Posterior vena cava (tissue), 2 donors: ENCODE measurements at regions of chr20 and their contacts with region 1.

Region 1: DNA sequence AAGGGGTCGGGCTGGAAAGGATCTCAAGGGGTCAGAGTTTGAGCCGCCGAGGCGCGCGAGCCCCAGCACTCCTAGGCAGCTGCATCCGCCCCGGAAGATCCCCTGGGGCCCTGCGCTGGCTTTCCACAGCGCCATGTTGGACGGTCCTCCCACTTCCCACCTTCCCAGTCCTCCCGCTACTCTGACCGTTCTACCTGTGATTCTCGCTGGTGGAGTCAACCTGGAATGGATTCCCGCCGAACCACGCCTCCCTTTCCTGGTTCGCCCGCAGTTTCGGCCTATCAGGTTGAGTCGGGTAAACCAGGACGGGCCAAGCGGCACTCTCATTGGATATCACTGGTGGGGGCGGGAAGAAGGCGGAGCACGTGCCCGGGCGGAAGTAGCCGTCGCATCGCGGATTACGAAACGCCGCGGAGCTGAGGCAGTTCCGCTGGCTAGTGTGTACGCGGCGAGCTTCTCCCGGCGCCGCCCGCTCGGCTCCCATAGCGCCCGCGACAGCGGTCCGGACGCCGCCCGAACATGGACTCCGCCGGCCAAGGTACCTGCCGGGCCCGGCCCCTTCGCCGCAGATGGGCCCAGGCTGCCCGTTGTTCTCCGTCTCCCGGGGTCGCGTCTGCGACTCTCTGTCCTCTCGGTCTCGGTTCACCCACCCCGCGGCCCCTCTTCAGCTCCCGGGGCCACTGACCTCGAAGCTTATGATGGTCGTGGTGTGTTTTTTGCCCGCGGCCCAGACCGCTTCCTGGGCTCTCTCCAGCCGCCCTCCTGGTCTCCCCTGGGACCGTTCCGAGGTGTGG is at the start of gene TPD52L2:
- DNase-seq: peak; percentile 100
- total RNA-seq, gene TPD52L2: 113 to 132 TPM

Region 2: DNA sequence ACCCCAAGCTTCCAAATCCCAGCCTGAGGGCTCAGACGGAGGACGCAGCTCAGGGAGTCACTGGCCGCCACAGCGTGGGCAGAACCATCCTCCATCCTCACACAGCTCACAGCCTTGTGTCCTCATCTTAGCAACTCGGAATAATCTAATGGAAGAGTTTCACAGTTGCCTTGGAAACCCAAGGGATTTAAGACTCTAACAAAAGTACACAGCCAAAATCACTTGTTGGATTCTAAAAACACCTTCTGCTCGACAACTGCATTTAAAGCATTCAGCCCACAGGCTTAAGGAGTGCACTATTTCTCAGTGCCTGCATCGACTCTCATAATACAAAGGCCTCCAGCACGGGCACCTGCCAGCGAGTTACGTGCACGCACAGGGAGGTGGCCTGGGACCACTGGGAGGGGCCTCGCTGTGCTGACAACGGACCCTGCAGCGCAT is 79.3 kb before region 1 on chr20:
- intact Hi-C with region 1: loop called in 1 of 2 experiments (anchors 5 kb)
- DNase-seq: no peak

Region 3: DNA sequence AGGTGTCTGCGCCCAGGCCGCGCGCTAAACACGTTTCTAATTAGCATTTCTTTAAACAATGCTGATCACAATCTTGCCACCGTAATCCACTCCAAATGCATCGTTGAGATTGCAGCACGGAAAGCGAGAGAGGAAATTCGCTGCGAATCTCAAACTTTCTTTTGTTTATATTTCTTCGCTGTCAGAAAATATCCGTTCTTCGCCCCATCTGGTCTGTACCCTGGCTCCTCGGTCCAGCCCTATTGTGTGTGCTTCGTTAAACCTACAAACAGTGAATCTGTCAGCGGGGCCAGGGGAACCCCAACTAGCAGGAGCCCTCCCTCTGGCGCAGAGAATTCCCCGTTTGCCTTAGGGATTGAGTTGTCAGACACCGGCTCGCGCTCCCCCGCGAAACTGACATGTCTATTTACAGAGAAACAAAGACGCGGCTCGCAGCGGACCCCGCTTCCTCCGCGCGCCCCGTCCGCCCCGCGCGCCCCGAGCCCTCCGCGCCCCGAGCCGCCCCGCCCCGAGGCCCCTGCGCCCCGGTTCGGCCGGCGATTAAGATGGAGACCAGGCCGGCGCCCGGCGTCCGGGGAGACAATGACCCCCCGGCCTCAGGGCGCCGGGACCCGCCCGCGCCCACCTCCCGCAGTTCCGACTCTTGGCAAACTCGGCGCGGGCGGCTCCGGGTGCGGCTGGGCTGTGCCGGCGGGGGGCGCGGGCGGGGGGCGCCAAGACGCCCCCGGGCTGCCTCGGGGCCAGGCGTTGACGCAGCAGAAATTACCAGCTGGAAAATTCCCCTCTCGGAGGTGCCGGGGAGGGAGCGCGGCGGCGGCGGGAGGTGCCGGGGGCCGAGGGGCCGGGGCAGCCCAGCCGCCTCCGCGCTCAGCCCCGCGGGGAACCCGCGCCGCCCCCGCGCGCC is 34.9 kb before region 1 on chr20:
- intact Hi-C with region 1: loop called in 1 of 2 experiments (anchors 5 kb)
- DNase-seq: no peak

Region 4: DNA sequence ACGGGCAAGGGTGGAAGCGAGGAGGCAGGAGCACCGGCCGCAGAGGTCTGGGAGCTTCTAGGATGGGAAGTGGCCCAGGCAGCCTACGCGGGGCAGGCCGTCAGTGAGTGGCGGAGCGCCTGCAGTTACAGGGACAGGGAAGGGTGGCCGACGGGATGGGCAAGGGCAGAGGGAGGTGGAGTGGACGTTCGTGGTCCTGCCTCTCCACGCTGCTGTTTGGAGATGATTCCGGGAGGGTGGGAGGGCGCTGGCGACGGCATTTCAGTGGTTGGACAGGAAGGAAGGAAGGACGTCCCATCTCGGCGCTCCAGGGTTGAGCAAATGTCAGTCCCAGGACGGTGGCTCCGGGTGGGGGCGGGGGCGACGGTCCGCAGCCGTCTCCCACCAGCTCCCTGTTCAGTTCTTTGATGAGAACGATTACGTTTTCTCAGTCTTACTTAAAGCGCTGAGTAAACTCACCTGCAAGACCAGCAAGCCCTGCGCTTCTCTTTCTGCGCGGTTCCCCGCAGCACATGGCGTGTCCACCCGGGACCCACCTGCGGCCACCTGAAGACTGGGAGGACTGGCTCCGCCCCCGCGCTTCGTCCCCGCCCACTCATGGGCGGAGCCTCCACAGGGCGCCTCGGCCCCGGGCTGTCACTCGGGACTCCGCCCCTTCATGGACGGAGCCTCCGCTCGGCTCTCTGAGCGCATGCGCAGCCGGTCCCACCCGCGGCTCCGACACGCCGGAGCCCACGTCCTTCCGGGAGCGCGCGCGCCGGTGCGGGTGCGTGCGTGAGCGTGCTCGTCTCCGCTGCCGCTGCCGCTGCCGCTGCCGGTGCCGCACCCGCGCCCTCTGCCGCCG is 29.5 kb after region 1 on chr20 and contains the start of gene DNAJC5:
- intact Hi-C with region 1: no loop called
- DNase-seq: peak; percentile 99
- total RNA-seq, gene DNAJC5: 31.1 to 31.7 TPM